ENCODE measurements at regions of chr17 and their contacts with region 1.

Region 1: GRCh38 chr17:27879987-27880608 is 13.1 kb downstream of the LYRM9 start:
- DNase-seq: peak; percentile 88
- H3K4me3 ChIP-seq: no peak overlapping the region; a peak in 1 of 4 replicates
- H3K27ac ChIP-seq: no peak overlapping the region
- H3K4me1 ChIP-seq: peaks cover 0 to 3% of the 10 kb centered on the region in 2 experiments; a peak in 1 of 4 replicates
- H3K27me3 ChIP-seq: no peaks in the 10 kb centered on the region
- CTCF ChIP-seq: peak; percentile 89
- EP300 ChIP-seq: no peak
- RAD21 ChIP-seq: peak; percentile 95

Region 2: DNA sequence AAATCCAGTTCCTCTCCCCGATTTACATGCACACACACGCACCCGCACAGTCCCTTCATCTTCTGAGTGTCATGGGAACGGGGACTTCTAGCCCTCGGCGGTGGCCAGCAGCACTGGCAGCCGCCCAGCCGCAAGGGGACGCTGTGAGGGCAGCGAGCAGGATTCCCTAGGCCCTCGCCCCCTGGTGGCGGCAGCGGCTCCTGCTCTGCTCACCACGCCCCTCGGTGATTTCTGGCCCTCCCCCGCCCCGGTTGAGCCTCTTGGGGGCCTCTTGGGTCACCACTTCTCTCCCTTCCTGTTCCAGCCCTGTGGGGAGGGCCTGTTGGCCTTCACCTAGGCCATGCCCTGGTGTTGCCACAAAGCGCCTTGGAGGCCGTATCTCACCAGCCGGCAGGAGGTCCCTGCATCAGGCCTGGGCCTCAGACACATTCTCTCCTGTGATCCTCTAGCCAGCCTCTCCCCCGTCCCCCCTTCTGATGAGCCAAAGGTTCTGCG is 499.0 kb before region 1 on chr17:
- CTCF ChIA-PET with region 1: no interaction called
- POLR2A ChIA-PET with region 1: no interaction called
- DNase-seq: peak; percentile 89
- H3K4me3 ChIP-seq: peak overlapping the region; percentile 18 to 31; a peak in 1 of 4 replicates
- H3K27ac ChIP-seq: no peak overlapping the region
- H3K4me1 ChIP-seq: peaks cover 23 to 30% of the 10 kb centered on the region in 2 experiments; a peak in 3 of 4 replicates
- H3K27me3 ChIP-seq: no peaks in the 10 kb centered on the region
- CTCF ChIP-seq: peak; percentile 85
- EP300 ChIP-seq: no peak
- RAD21 ChIP-seq: peak; percentile 57

Region 3: GRCh38 chr17:27760069-27760885 is 119.8 kb before region 1 on chr17:
- CTCF ChIA-PET with region 1: interaction called, 289 read pairs
- POLR2A ChIA-PET with region 1: interaction called, 5 read pairs
- DNase-seq: peak; percentile 77
- H3K4me3 ChIP-seq: no peak overlapping the region; a peak in 1 of 4 replicates
- H3K27ac ChIP-seq: no peak overlapping the region
- H3K4me1 ChIP-seq: no peaks in the 10 kb centered on the region
- H3K27me3 ChIP-seq: no peaks in the 10 kb centered on the region
- CTCF ChIP-seq: peak; percentile 86
- EP300 ChIP-seq: no peak
- RAD21 ChIP-seq: peak; percentile 65

Region 4: DNA sequence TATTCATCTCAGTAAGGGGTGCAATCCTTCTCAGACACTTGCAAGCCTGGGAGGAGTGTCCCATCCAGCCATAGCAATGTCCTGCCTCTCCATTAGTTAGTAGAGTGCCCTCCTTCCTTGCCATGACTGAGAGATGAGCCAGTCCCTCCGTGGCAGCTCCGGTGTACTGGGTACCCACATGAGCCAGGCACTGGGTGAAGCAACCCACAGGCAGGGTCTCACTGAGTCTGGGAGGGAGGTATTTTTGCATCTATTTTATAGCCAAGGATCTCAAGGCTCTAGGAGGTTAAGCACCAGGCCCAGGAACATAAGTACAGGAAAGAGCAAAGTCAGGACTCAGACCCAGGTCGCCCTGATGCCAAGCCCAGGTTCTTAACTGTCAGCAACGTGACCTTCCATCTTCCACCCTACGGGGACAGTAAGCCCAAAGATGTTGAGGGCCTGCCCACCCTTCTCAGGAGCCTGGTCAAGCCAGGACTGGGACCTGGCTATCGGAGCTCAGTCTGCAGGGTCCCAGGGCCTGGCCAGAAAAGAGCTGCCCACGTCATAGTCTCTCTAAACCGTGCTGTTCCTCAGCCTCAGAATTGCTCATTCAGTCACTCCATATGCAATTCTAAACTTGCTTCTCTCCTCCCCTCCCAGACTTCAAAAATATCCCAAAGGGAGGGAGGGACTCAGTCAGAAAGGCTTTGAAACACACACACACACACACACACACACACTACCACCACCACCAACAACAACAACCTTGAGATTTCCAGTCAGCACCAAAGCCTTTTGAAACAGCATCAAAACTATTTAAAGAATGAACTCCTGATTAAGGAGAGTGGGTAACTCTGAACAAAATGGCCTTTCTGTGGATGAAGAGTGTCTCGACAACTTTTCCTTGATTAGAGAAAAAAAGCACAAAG is 96.4 kb before region 1 on chr17:
- CTCF ChIA-PET with region 1: interaction called, 19 read pairs
- POLR2A ChIA-PET with region 1: no interaction called
- DNase-seq: no peak
- H3K4me3 ChIP-seq: no peak overlapping the region
- H3K27ac ChIP-seq: no peak overlapping the region
- H3K4me1 ChIP-seq: peaks cover 0 to 3% of the 10 kb centered on the region in 2 experiments; a peak in 1 of 4 replicates
- H3K27me3 ChIP-seq: no peaks in the 10 kb centered on the region
- CTCF ChIP-seq: no peak
- EP300 ChIP-seq: no peak
- RAD21 ChIP-seq: no peak

Region 5: GRCh38 chr17:27811961-27812360 is 68.1 kb before region 1 on chr17:
- CTCF ChIA-PET with region 1: interaction called, 275 read pairs
- POLR2A ChIA-PET with region 1: no interaction called
- DNase-seq: no peak
- H3K4me3 ChIP-seq: no peak overlapping the region
- H3K27ac ChIP-seq: no peak overlapping the region
- H3K4me1 ChIP-seq: peaks cover 0 to 4% of the 10 kb centered on the region in 2 experiments; a peak in 1 of 4 replicates
- H3K27me3 ChIP-seq: no peaks in the 10 kb centered on the region
- CTCF ChIP-seq: no peak
- EP300 ChIP-seq: no peak
- RAD21 ChIP-seq: no peak

Region 6: GRCh38 chr17:27860971-27861664 is 19.0 kb before region 1 on chr17:
- CTCF ChIA-PET with region 1: interaction called, 22 read pairs
- POLR2A ChIA-PET with region 1: no interaction called
- DNase-seq: no peak
- H3K4me3 ChIP-seq: no peak overlapping the region
- H3K27ac ChIP-seq: no peak overlapping the region
- H3K4me1 ChIP-seq: no peaks in the 10 kb centered on the region
- H3K27me3 ChIP-seq: no peaks in the 10 kb centered on the region; the same call in 1 of the 2 replicates
- CTCF ChIP-seq: no peak
- EP300 ChIP-seq: no peak
- RAD21 ChIP-seq: no peak

Region 7: DNA sequence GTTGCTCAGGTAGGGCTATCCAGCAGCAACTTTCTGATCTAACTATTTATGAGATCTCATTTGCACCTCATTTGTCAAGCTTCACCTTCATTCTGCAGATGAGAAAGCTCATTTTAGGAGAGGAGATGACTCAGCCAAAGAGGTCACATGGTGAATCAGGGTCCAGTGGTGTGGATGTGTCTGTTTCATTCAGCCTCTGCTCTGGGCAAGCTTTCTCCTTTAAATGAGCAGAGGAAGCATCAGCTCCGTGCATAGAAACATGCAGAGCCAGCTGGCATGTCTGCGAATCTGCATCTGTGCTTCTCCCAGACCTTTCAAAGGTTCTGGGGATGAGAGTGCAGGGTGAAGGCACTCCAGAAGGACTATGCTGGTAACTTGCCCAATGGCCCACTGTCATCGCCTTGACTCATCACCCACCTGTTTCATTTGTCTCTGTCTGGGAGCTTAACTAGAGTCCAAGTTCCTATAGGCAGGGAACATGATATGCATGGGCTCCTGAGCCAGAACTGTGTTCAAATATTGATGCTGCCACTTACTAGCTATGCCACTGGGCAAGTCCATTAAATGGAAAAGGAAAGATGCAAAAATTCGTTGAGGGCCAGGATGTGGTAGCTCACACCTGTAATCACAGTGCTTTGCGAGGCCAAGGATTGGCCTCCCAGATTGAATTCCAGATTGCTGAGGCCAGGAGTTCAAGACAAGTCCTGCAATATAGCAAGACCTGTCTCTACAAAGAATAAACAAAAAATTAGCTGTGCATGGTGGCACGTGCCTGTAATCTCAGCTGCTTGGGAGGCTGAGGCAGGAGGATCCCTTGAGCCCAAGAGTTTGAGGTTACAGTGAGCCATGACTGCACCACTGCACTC is 95.3 kb after region 1 on chr17:
- CTCF ChIA-PET with region 1: no interaction called
- POLR2A ChIA-PET with region 1: no interaction called
- DNase-seq: no peak
- H3K4me3 ChIP-seq: no peak overlapping the region
- H3K27ac ChIP-seq: peak overlapping the region in 1 of 2 experiments; percentile 12; a peak in 1 of 4 replicates
- H3K4me1 ChIP-seq: no peaks in the 10 kb centered on the region
- H3K27me3 ChIP-seq: no peaks in the 10 kb centered on the region
- CTCF ChIP-seq: no peak
- EP300 ChIP-seq: no peak
- RAD21 ChIP-seq: no peak

Measured in SK-N-SH (cell line).